ENCODE measurements at regions of chrX and their contacts with region 1.

Region 1: GRCh38 chrX:107776649-107777535 is 641 bp upstream of the NCBP2L start:
- DNase-seq: peak; percentile 69 to 88
- ATAC-seq: peak; percentile 84 to 86
- H3K4me3 ChIP-seq: peak overlapping the region; percentile 56
- H3K27ac ChIP-seq: peak overlapping the region; percentile 74 to 81; a peak in 5 of 6 replicates
- H3K4me1 ChIP-seq: 0 out of 3 replicates have a peak, but pooled peaks cover 4% of the 10 kb centered on the region
- CTCF ChIP-seq: peak; percentile 74
- EP300 ChIP-seq: no peak
- POLR2A ChIP-seq: no peak
- RAD21 ChIP-seq: peak; percentile 87 to 90

Region 2: GRCh38 chrX:107672955-107673378 is 103.9 kb before region 1 on chrX:
- CTCF ChIA-PET with region 1: interaction called, 236 read pairs
- POLR2A ChIA-PET with region 1: interaction called, 6 read pairs
- DNase-seq: peak; percentile 31 to 86
- ATAC-seq: peak; percentile 42 to 54
- H3K4me3 ChIP-seq: no peak overlapping the region; the same call in 2 of the 3 replicates
- H3K27ac ChIP-seq: peak overlapping the region; percentile 34 to 73; a peak in 4 of 6 replicates
- H3K4me1 ChIP-seq: peaks cover 40% of the 10 kb centered on the region
- CTCF ChIP-seq: peak; percentile 56
- EP300 ChIP-seq: no peak
- POLR2A ChIP-seq: no peak
- RAD21 ChIP-seq: peak; percentile 76

Region 3: GRCh38 chrX:107716816-107717700 is 59.8 kb before region 1 on chrX:
- CTCF ChIA-PET with region 1: interaction called, 70 read pairs
- POLR2A ChIA-PET with region 1: interaction called, 29 read pairs
- DNase-seq: peak; percentile 71 to 88
- ATAC-seq: peak; percentile 81 to 83
- H3K4me3 ChIP-seq: peak overlapping the region; percentile 84
- H3K27ac ChIP-seq: peak overlapping the region; percentile 89
- H3K4me1 ChIP-seq: peaks cover 37% of the 10 kb centered on the region
- CTCF ChIP-seq: no peak
- EP300 ChIP-seq: no peak
- POLR2A ChIP-seq: peak; percentile 76
- RAD21 ChIP-seq: no peak

Region 4: DNA sequence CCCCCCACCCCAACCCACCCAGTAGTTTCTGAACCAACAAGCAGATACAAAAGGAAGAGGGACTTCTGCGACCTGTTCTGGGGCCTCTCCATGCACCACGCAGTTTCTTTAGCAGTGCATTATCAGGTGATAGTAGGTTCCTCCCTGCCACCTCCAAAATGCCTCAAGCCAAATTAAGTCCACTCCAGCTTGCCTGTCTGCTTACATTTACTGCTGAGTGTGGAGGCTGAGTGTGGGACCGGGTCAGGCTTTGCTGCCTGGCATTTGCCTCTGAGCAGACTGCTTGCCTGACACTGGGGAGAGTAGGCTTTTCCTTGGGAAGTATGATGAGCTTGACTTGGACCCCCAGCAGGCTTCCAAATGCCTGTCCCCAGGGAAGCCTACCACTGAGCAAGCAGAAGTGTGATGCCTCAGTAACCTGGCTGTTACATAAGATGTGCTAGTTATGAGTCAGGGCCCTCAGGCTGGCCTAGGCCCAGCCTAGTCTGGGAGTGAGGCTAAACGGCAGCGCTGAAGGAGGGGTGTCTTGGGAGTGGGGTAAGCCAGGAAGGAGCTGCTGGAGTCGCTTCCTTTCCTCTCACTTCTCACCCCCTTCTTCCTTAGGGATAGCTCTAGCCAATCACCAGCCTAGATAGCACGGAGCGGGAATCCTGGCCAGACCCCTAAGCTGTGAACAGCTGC is 10.3 kb before region 1 on chrX:
- CTCF ChIA-PET with region 1: interaction called, 24 read pairs
- POLR2A ChIA-PET with region 1: no interaction called
- DNase-seq: no peak
- ATAC-seq: peak; percentile 57 to 81
- H3K4me3 ChIP-seq: no peak overlapping the region
- H3K27ac ChIP-seq: no peak overlapping the region
- H3K4me1 ChIP-seq: peaks cover 9% of the 10 kb centered on the region
- CTCF ChIP-seq: no peak
- EP300 ChIP-seq: no peak
- POLR2A ChIP-seq: no peak
- RAD21 ChIP-seq: no peak

Region 5: DNA sequence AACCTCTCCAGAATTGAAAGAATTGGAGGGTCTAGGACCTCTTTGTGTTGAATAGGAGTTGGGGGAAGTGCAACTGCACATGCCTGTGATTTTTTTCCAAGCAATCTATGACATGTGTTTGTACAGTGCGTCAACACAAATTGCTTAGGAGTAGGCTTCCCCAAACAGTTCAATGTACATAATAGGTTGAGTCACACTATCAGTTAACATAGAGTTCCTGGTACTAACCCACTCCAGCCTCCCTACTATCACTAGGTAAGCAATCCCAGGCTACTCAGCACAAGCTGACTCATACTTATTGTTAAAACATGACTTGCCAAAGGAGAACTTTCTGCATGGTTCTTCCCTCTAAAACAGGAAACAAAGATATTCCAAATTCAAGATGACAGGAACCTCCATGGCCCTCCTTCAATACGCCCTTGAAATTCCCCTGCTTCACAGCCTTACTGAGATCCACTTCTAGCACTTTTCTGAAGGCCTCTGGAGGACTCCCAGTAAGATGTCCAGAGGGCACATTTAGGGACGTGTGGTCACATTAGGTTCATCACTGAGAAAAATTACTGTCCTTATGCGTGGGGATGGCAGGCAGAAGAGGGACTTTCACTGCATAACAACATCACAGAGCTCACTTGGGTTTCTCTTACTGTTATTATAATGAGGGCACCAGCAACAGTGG is 259.5 kb after region 1 on chrX:
- CTCF ChIA-PET with region 1: no interaction called
- POLR2A ChIA-PET with region 1: no interaction called
- DNase-seq: peak; percentile 89 to 97
- ATAC-seq: peak; percentile 99 to 100
- H3K4me3 ChIP-seq: no peak overlapping the region; the same call in 2 of the 3 replicates
- H3K27ac ChIP-seq: peak overlapping the region; percentile 94
- H3K4me1 ChIP-seq: peaks cover 53% of the 10 kb centered on the region
- CTCF ChIP-seq: no peak
- EP300 ChIP-seq: peak; percentile 39 to 65; a peak in 3 of 5 replicates
- POLR2A ChIP-seq: no peak
- RAD21 ChIP-seq: no peak; a peak in 2 of 5 replicates

Measured in A549 (cell line).